CD8-positive, alpha-beta T cell (primary cell): ENCODE measurements at regions of chr9 and their contacts with region 1.

Region 1: GRCh38 chr9:99819856-99820684 is 1.6 kb upstream of the NR4A3 start:
- DNase-seq: peak; percentile 81 to 99 (median 93)
- ATAC-seq: peak; percentile 52
- H3K4me3 ChIP-seq: peak overlapping the region; percentile 77 to 90
- H3K4me3 Mint-ChIP-seq: peak overlapping the region; percentile 99
- H3K27ac ChIP-seq: peak overlapping the region; percentile 87 to 88
- H3K27ac Mint-ChIP-seq: peak overlapping the region; percentile 99
- H3K4me1 ChIP-seq: peaks cover 44% of the 10 kb centered on the region
- H3K4me1 Mint-ChIP-seq: peaks cover 43% of the 10 kb centered on the region
- H3K27me3 ChIP-seq: peaks cover 21 to 33% of the 10 kb centered on the region in 2 experiments
- H3K27me3 Mint-ChIP-seq: peaks cover 24% of the 10 kb centered on the region
- CTCF ChIP-seq: no peak

Region 2: DNA sequence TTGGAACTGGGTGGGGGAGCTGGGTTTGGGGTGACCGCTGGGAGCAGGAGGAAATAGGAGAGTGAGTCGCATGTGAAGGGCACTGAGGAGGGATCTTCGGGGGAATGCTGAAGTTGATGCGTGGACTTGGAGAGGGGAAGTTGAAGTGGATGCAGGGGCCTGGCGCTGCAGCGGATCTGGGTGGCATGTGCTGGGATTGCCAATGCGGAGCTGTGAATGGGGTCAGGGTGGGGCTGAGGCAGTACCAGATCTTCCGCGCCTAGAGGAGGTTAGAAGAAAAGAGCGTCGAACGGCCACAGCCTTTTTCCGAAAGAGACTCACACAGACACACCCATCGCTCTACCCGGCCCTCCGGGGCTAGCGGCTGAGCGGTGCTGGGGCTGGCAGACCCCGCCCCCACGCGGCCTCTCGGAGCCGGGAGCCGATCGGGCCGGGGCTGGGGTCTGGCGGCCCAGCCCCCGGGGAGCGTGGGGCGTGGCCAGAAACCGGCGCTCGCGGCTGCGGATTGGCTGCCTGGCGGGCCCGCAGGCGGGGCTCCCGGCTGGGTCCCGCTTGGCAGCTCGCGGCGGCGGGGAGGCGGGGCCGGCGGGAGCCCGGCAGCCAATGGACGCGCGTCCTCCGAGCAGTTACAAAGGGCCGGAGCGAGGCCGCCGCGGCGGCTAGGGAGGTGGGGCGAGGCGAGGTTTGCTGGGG is 715.5 kb before region 1 on chr9 and contains the start of gene TGFBR1:
- CTCF ChIA-PET with region 1: no interaction called
- POLR2A ChIA-PET with region 1: no interaction called
- intact Hi-C with region 1: loop called in 1 of 2 experiments (anchors 5 kb)
- DNase-seq: peak; percentile 81 to 96 (median 89)
- ATAC-seq: peak; percentile 81
- H3K4me3 ChIP-seq: peak within 1 kb of the TSS; percentile 68 to 85
- H3K4me3 Mint-ChIP-seq: peak within 1 kb of the TSS; percentile 90
- H3K27ac ChIP-seq: peak within 1 kb of the TSS; percentile 57 to 70
- H3K27ac Mint-ChIP-seq: peak within 1 kb of the TSS; percentile 91
- H3K4me1 ChIP-seq: peaks cover 48% of the 10 kb centered on the region
- H3K4me1 Mint-ChIP-seq: peaks cover 64% of the 10 kb centered on the region
- H3K27me3 ChIP-seq: no peaks in the 10 kb centered on the region
- H3K27me3 Mint-ChIP-seq: no peaks in the 10 kb centered on the region
- CTCF ChIP-seq: no peak
- total RNA-seq, gene TGFBR1: 24.2 to 25.8 TPM

Region 3: GRCh38 chr9:99221621-99222415 is 598.3 kb before region 1 on chr9 and contains the starts of genes ALG2 and SEC61B:
- CTCF ChIA-PET with region 1: no interaction called
- POLR2A ChIA-PET with region 1: interaction called, 4 read pairs
- intact Hi-C with region 1: loop called (anchors 1 to 5 kb)
- DNase-seq: peak; percentile 87 to 96 (median 94)
- ATAC-seq: peak; percentile 88
- H3K4me3 ChIP-seq: peak within 1 kb of the TSS; percentile 79 to 90
- H3K4me3 Mint-ChIP-seq: peak within 1 kb of the TSS; percentile 99
- H3K27ac ChIP-seq: peak within 1 kb of the TSS; percentile 95 to 99
- H3K27ac Mint-ChIP-seq: peak within 1 kb of the TSS; percentile 100
- H3K4me1 ChIP-seq: peaks cover 30% of the 10 kb centered on the region
- H3K4me1 Mint-ChIP-seq: peaks cover 80% of the 10 kb centered on the region
- H3K27me3 ChIP-seq: no peaks in the 10 kb centered on the region
- H3K27me3 Mint-ChIP-seq: no peaks in the 10 kb centered on the region
- CTCF ChIP-seq: no peak
- total RNA-seq, gene ALG2: 21.0 to 24.7 TPM
- total RNA-seq, gene SEC61B: 107 to 108 TPM

Region 4: GRCh38 chr9:99842797-99843196 is 22.7 kb after region 1 on chr9:
- CTCF ChIA-PET with region 1: no interaction called
- POLR2A ChIA-PET with region 1: no interaction called
- intact Hi-C with region 1: no loop called
- DNase-seq: no peak
- ATAC-seq: no peak
- H3K4me3 ChIP-seq: no peak overlapping the region
- H3K4me3 Mint-ChIP-seq: no peak overlapping the region
- H3K27ac ChIP-seq: no peak overlapping the region
- H3K27ac Mint-ChIP-seq: no peak overlapping the region
- H3K4me1 ChIP-seq: no peaks in the 10 kb centered on the region
- H3K4me1 Mint-ChIP-seq: no peaks in the 10 kb centered on the region
- H3K27me3 ChIP-seq: no peaks in the 10 kb centered on the region
- H3K27me3 Mint-ChIP-seq: no peaks in the 10 kb centered on the region
- CTCF ChIP-seq: no peak

Region 5: GRCh38 chr9:99906403-99907207 is 86.5 kb after region 1 on chr9 and contains the start of gene STX17:
- CTCF ChIA-PET with region 1: interaction called, 5 read pairs
- POLR2A ChIA-PET with region 1: interaction called, 12 read pairs
- intact Hi-C with region 1: loop called (anchors 1 kb)
- DNase-seq: peak; percentile 64 to 92 (median 84)
- ATAC-seq: peak; percentile 85
- H3K4me3 ChIP-seq: peak within 1 kb of the TSS; percentile 95 to 96
- H3K4me3 Mint-ChIP-seq: peak within 1 kb of the TSS; percentile 97
- H3K27ac ChIP-seq: peak within 1 kb of the TSS; percentile 98 to 99
- H3K27ac Mint-ChIP-seq: peak within 1 kb of the TSS; percentile 100
- H3K4me1 ChIP-seq: peaks cover 20% of the 10 kb centered on the region
- H3K4me1 Mint-ChIP-seq: peaks cover 33% of the 10 kb centered on the region
- H3K27me3 ChIP-seq: no peaks in the 10 kb centered on the region
- H3K27me3 Mint-ChIP-seq: no peaks in the 10 kb centered on the region
- CTCF ChIP-seq: no peak
- total RNA-seq, gene STX17: 21.0 to 23.1 TPM

Region 6: GRCh38 chr9:100352727-100353505 is 532.8 kb after region 1 on chr9 and contains the start of gene TEX10:
- CTCF ChIA-PET with region 1: no interaction called
- POLR2A ChIA-PET with region 1: interaction called, 4 read pairs
- intact Hi-C with region 1: loop called (anchors 5 to 10 kb)
- DNase-seq: peak; percentile 72 to 93 (median 88)
- ATAC-seq: peak; percentile 89
- H3K4me3 ChIP-seq: peak within 1 kb of the TSS; percentile 90 to 92
- H3K4me3 Mint-ChIP-seq: peak within 1 kb of the TSS; percentile 94
- H3K27ac ChIP-seq: peak within 1 kb of the TSS; percentile 68
- H3K27ac Mint-ChIP-seq: peak within 1 kb of the TSS; percentile 91
- H3K4me1 ChIP-seq: peaks cover 32% of the 10 kb centered on the region
- H3K4me1 Mint-ChIP-seq: peaks cover 60% of the 10 kb centered on the region
- H3K27me3 ChIP-seq: no peaks in the 10 kb centered on the region
- H3K27me3 Mint-ChIP-seq: no peaks in the 10 kb centered on the region
- CTCF ChIP-seq: no peak
- total RNA-seq, gene TEX10: 9.5 to 9.8 TPM

Region 7: GRCh38 chr9:101398068-101398929 is 1578.2 kb after region 1 on chr9 and contains the starts of genes MRPL50 and ZNF189:
- CTCF ChIA-PET with region 1: no interaction called
- POLR2A ChIA-PET with region 1: no interaction called
- intact Hi-C with region 1: loop called in 1 of 2 experiments (anchors 10 kb)
- DNase-seq: peak; percentile 89 to 99 (median 95)
- ATAC-seq: peak; percentile 93
- H3K4me3 ChIP-seq: peak within 1 kb of the TSS; percentile 87 to 91
- H3K4me3 Mint-ChIP-seq: peak within 1 kb of the TSS; percentile 97
- H3K27ac ChIP-seq: peak within 1 kb of the TSS; percentile 96 to 98
- H3K27ac Mint-ChIP-seq: peak within 1 kb of the TSS; percentile 99
- H3K4me1 ChIP-seq: peaks cover 54% of the 10 kb centered on the region
- H3K4me1 Mint-ChIP-seq: peaks cover 80% of the 10 kb centered on the region
- H3K27me3 ChIP-seq: no peaks in the 10 kb centered on the region
- H3K27me3 Mint-ChIP-seq: no peaks in the 10 kb centered on the region
- CTCF ChIP-seq: no peak
- total RNA-seq, gene MRPL50: 7.5 to 8.4 TPM
- total RNA-seq, gene ZNF189: 4.0 to 5.2 TPM